B cell (primary cell): ENCODE measurements at regions of chr11 and their contacts with region 1.

Region 1: GRCh38 chr11:128630367-128631230 is 43.2 kb upstream of the ETS1 start:
- DNase-seq: peak; percentile 96
- ATAC-seq: peak; percentile 87
- H3K4me3 ChIP-seq: peak overlapping the region in 2 of 5 experiments; percentile 3 to 11
- H3K4me3 Mint-ChIP-seq: peak overlapping the region; percentile 65
- H3K27ac ChIP-seq: peak overlapping the region; percentile 43 to 90
- H3K27ac Mint-ChIP-seq: peak overlapping the region; percentile 93
- H3K4me1 ChIP-seq: peaks cover 66 to 68% of the 10 kb centered on the region in 2 donors
- H3K4me1 Mint-ChIP-seq: peaks cover 66% of the 10 kb centered on the region
- H3K27me3 ChIP-seq: no peaks in the 10 kb centered on the region
- H3K27me3 Mint-ChIP-seq: no peaks in the 10 kb centered on the region
- CTCF ChIP-seq: peak; percentile 86

Region 2: DNA sequence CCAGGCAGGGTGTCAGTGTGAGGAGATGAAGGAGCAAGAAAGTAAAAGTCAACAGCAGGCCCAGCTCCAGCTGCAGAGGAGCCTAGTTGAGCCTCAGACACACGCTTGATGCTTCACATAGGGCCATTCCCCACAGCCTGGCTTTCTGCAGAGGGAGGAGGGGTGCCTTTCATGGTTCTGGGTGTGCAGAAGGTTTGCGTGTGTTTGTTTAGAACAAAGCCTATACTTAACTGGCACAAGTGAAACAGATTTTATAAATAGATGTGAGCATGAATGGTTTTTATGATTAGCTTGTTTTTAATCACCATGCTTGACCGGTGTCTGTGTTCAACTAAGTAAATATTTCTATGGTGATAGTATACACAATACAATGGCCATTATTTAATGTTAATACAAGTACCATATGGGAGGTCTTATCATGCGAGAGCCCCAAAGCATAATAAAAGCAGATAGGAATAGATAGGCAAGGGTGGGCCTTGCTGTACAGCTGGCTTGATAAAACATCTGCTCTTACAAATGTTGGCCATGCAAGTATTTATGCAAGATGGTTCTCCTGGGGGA is 333.4 kb before region 1 on chr11:
- CTCF ChIA-PET with region 1: interaction called, 251 read pairs
- POLR2A ChIA-PET with region 1: no interaction called
- intact Hi-C with region 1: no loop called
- DNase-seq: no peak
- ATAC-seq: peak; percentile 53
- H3K4me3 ChIP-seq: peak overlapping the region in 1 of 5 experiments; percentile 1
- H3K4me3 Mint-ChIP-seq: peak overlapping the region; percentile 12
- H3K27ac ChIP-seq: peak overlapping the region; percentile 17 to 42
- H3K27ac Mint-ChIP-seq: peak overlapping the region; percentile 24
- H3K4me1 ChIP-seq: peaks cover 87 to 89% of the 10 kb centered on the region in 2 donors
- H3K4me1 Mint-ChIP-seq: peaks cover 86% of the 10 kb centered on the region
- H3K27me3 ChIP-seq: no peaks in the 10 kb centered on the region
- H3K27me3 Mint-ChIP-seq: no peaks in the 10 kb centered on the region
- CTCF ChIP-seq: no peak

Region 3: GRCh38 chr11:128491195-128491936 is 139.2 kb before region 1 on chr11:
- CTCF ChIA-PET with region 1: interaction called, 12 read pairs
- POLR2A ChIA-PET with region 1: no interaction called
- intact Hi-C with region 1: no loop called
- DNase-seq: no peak
- ATAC-seq: no peak
- H3K4me3 ChIP-seq: no peak overlapping the region
- H3K4me3 Mint-ChIP-seq: peak overlapping the region; percentile 4
- H3K27ac ChIP-seq: peak overlapping the region in 1 of 2 donors; percentile 82
- H3K27ac Mint-ChIP-seq: peak overlapping the region; percentile 75
- H3K4me1 ChIP-seq: peaks cover 55 to 58% of the 10 kb centered on the region in 2 donors
- H3K4me1 Mint-ChIP-seq: peaks cover 82% of the 10 kb centered on the region
- H3K27me3 ChIP-seq: no peaks in the 10 kb centered on the region
- H3K27me3 Mint-ChIP-seq: no peaks in the 10 kb centered on the region
- CTCF ChIP-seq: no peak

Region 4: GRCh38 chr11:128552783-128553661 is 77.6 kb before region 1 on chr11:
- CTCF ChIA-PET with region 1: interaction called, 81 read pairs
- POLR2A ChIA-PET with region 1: interaction called, 40 read pairs
- intact Hi-C with region 1: loop called (anchors 1 kb)
- DNase-seq: peak; percentile 93
- ATAC-seq: peak; percentile 80
- H3K4me3 ChIP-seq: peak overlapping the region; percentile 4 to 58 (median 27)
- H3K4me3 Mint-ChIP-seq: peak overlapping the region; percentile 85
- H3K27ac ChIP-seq: peak overlapping the region; percentile 92 to 93
- H3K27ac Mint-ChIP-seq: peak overlapping the region; percentile 99
- H3K4me1 ChIP-seq: peaks cover 62 to 71% of the 10 kb centered on the region in 2 donors
- H3K4me1 Mint-ChIP-seq: peaks cover 70% of the 10 kb centered on the region
- H3K27me3 ChIP-seq: no peaks in the 10 kb centered on the region
- H3K27me3 Mint-ChIP-seq: no peaks in the 10 kb centered on the region
- CTCF ChIP-seq: peak; percentile 10

Region 5: DNA sequence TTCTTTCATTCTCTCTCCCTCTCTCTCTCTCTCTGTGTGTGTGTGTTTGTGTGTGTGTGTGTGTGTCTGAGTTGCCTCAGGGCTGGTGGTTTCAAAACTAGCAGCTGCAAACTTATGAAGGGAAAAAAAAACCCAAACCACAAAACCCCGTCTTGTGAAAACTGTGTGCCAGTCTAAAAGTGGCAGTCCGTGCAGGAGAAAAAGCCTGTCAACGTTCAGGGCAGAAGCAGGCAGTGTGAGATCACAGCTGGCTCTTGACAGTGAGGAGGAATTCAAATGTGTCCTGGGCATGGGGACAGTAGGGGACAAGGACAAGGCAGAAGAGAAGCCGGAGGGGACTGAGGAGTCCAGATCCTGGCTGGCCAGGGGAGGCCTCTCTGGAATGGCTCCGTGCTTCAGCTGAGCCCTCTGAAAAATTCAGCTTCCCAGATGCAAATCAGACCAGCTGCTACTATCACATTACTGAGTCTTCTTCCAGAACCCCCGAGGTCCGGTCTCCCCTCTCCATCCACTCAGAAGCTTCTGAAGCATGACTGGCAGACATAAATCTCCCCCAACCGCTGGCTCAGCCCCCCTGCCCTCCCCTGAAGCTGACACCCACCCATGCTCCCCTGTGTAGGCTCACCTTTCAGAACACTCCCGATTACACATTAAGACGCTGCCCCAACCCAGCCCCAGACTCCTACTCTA is 95.2 kb after region 1 on chr11:
- CTCF ChIA-PET with region 1: interaction called, 28 read pairs
- POLR2A ChIA-PET with region 1: interaction called, 3 read pairs
- intact Hi-C with region 1: no loop called
- DNase-seq: peak; percentile 90
- ATAC-seq: peak; percentile 67
- H3K4me3 ChIP-seq: peak overlapping the region; percentile 27 to 57 (median 43)
- H3K4me3 Mint-ChIP-seq: peak overlapping the region; percentile 93
- H3K27ac ChIP-seq: peak overlapping the region; percentile 70 to 88
- H3K27ac Mint-ChIP-seq: peak overlapping the region; percentile 92
- H3K4me1 ChIP-seq: peaks cover 98 to 100% of the 10 kb centered on the region in 2 donors
- H3K4me1 Mint-ChIP-seq: peaks cover 96% of the 10 kb centered on the region
- H3K27me3 ChIP-seq: no peaks in the 10 kb centered on the region
- H3K27me3 Mint-ChIP-seq: no peaks in the 10 kb centered on the region
- CTCF ChIP-seq: no peak

Region 6: DNA sequence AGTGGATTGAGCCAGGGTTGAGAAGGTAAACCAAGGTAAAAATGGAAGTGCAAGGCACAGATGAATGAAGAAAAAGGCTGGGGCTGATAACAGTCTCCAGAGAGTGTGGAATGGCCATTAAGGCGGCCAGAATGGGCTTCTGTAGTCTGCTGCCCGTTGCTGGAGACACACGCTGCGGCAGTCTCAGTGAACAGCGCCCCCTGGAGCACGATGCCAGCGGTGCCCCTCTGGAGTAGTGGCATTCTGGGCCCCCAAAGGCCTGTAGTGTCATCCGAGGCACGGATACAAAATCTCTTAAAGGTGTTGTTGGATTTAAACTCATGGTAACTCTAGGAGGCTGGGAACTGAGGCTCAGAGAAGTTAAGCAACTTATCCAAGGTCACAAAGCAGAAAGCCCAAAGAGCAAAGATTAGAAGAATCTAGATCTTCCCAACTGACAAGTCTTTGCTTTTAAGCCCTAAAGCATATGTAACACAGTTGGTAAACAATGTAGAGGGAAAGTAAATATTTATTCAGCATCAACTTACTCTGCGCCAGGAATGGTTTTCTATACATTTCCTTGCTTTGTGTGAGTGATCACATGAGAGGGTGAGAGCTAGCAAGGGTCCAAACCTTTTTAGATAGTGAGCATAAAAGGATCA is 218.3 kb after region 1 on chr11:
- CTCF ChIA-PET with region 1: interaction called, 30 read pairs
- POLR2A ChIA-PET with region 1: no interaction called
- intact Hi-C with region 1: loop called (anchors 5 kb)
- DNase-seq: peak; percentile 77
- ATAC-seq: peak; percentile 72
- H3K4me3 ChIP-seq: no peak overlapping the region
- H3K4me3 Mint-ChIP-seq: no peak overlapping the region
- H3K27ac ChIP-seq: no peak overlapping the region
- H3K27ac Mint-ChIP-seq: peak overlapping the region; percentile 65
- H3K4me1 ChIP-seq: peaks cover 45 to 60% of the 10 kb centered on the region in 2 donors
- H3K4me1 Mint-ChIP-seq: peaks cover 52% of the 10 kb centered on the region
- H3K27me3 ChIP-seq: no peaks in the 10 kb centered on the region
- H3K27me3 Mint-ChIP-seq: no peaks in the 10 kb centered on the region
- CTCF ChIP-seq: peak; percentile 91

Region 7: GRCh38 chr11:128917144-128917724 is 286.6 kb after region 1 on chr11:
- CTCF ChIA-PET with region 1: no interaction called
- POLR2A ChIA-PET with region 1: no interaction called
- intact Hi-C with region 1: no loop called
- DNase-seq: no peak
- ATAC-seq: no peak
- H3K4me3 ChIP-seq: no peak overlapping the region
- H3K4me3 Mint-ChIP-seq: no peak overlapping the region
- H3K27ac ChIP-seq: no peak overlapping the region
- H3K27ac Mint-ChIP-seq: no peak overlapping the region
- H3K4me1 ChIP-seq: peaks cover 0 to 4% of the 10 kb centered on the region in 2 donors
- H3K4me1 Mint-ChIP-seq: peaks cover 5% of the 10 kb centered on the region
- H3K27me3 ChIP-seq: peaks cover 0 to 21% (median 0%) of the 10 kb centered on the region in 4 experiments
- H3K27me3 Mint-ChIP-seq: peaks cover 41% of the 10 kb centered on the region
- CTCF ChIP-seq: no peak

Region 8: DNA sequence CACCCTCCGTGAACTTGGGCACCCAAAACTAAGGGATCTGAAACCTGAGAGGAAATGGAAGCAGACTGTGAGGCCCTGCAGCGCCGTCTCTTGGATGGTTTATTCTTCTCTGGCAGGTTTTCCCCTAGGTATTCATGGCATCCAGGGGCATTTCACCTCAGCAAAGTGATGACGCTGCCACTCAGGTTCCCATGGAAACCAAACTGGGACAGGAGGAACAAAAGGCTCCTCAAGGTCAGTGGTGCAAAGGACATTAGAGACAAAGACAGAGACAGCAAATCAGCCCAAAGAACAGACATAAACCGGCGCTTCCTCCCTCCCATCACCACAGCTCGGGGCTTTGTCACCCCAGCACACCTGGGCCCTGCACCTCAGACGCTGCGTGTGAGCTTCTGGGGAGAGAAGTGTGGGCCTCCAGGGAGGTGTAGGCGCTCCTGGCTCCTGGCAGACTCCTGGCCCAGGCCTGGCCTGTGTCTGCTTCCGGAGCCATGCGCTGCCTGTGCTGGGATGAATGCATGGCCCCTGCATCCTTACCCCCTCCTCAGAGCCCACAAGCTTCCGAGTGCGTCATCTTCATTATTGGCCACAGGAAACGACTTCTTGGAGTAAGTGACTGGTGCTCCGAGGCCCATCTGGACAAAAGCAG is 306.1 kb after region 1 on chr11:
- CTCF ChIA-PET with region 1: no interaction called
- POLR2A ChIA-PET with region 1: no interaction called
- intact Hi-C with region 1: no loop called
- DNase-seq: no peak
- ATAC-seq: no peak
- H3K4me3 ChIP-seq: no peak overlapping the region
- H3K4me3 Mint-ChIP-seq: no peak overlapping the region
- H3K27ac ChIP-seq: no peak overlapping the region
- H3K27ac Mint-ChIP-seq: no peak overlapping the region
- H3K4me1 ChIP-seq: no peaks in the 10 kb centered on the region
- H3K4me1 Mint-ChIP-seq: no peaks in the 10 kb centered on the region
- H3K27me3 ChIP-seq: peaks cover 0 to 23% (median 0%) of the 10 kb centered on the region in 4 experiments
- H3K27me3 Mint-ChIP-seq: peaks cover 28% of the 10 kb centered on the region
- CTCF ChIP-seq: no peak